Psoas muscle (tissue), 8 donors: ENCODE measurements at regions of chr12 and their contacts with region 1.

Region 1: GRCh38 chr12:55926738-55927587 is 731 bp downstream of the PYM1 start:
- DNase-seq: peak; percentile 87 to 92
- ATAC-seq: peak; percentile 92 to 95 (median 94)
- H3K4me3 ChIP-seq: peak overlapping the region; percentile 84
- H3K27ac ChIP-seq: peak overlapping the region; percentile 93
- H3K4me1 ChIP-seq: peaks cover 15% of the 10 kb centered on the region
- H3K27me3 ChIP-seq: no peaks in the 10 kb centered on the region
- CTCF ChIP-seq: peak; percentile 65

Region 2: GRCh38 chr12:55659486-55660385 is 267.2 kb before region 1 on chr12:
- intact Hi-C with region 1: loop called in 1 of 2 experiments (anchors 10 kb)
- DNase-seq: no peak
- ATAC-seq: peak; percentile 80 to 89 (median 86)
- H3K4me3 ChIP-seq: no peak overlapping the region
- H3K27ac ChIP-seq: peak overlapping the region; percentile 81
- H3K4me1 ChIP-seq: peaks cover 16% of the 10 kb centered on the region
- H3K27me3 ChIP-seq: no peaks in the 10 kb centered on the region
- CTCF ChIP-seq: peak; percentile 41

Region 3: GRCh38 chr12:55817346-55818139 is 109.4 kb before region 1 on chr12 and contains the starts of genes ORMDL2 and SARNP:
- intact Hi-C with region 1: loop called in 1 of 2 experiments (anchors 5 kb)
- DNase-seq: peak; percentile 95 to 96
- ATAC-seq: peak; percentile 98 to 99 (median 99)
- H3K4me3 ChIP-seq: peak within 1 kb of the TSS; percentile 84
- H3K27ac ChIP-seq: peak within 1 kb of the TSS; percentile 85
- H3K4me1 ChIP-seq: peaks cover 37% of the 10 kb centered on the region
- H3K27me3 ChIP-seq: no peaks in the 10 kb centered on the region
- CTCF ChIP-seq: no peak
- total RNA-seq, gene ORMDL2: 12.6 to 27.2 (median 15.0) TPM
- total RNA-seq, gene SARNP: 38.3 to 52.6 (median 43.0) TPM

Region 4: GRCh38 chr12:55829967-55830600 is 96.9 kb before region 1 on chr12:
- intact Hi-C with region 1: loop called (anchors 2 to 5 kb)
- DNase-seq: peak; percentile 56 to 74
- ATAC-seq: peak; percentile 28 to 44 (median 38)
- H3K4me3 ChIP-seq: peak overlapping the region; percentile 93
- H3K27ac ChIP-seq: peak overlapping the region; percentile 78
- H3K4me1 ChIP-seq: peaks cover 13% of the 10 kb centered on the region
- H3K27me3 ChIP-seq: no peaks in the 10 kb centered on the region
- CTCF ChIP-seq: no peak

Region 5: GRCh38 chr12:55966408-55967281 is 39.7 kb after region 1 on chr12 and contains the start of gene CDK2:
- intact Hi-C with region 1: loop called (anchors 5 kb)
- DNase-seq: peak; percentile 94 to 95
- ATAC-seq: peak; percentile 95 to 100 (median 98)
- H3K4me3 ChIP-seq: peak within 1 kb of the TSS; percentile 76
- H3K27ac ChIP-seq: peak within 1 kb of the TSS; percentile 73
- H3K4me1 ChIP-seq: peaks cover 5% of the 10 kb centered on the region
- H3K27me3 ChIP-seq: no peaks in the 10 kb centered on the region
- CTCF ChIP-seq: no peak
- total RNA-seq, gene CDK2: 6.3 to 12.0 (median 7.9) TPM